Activated T-helper 1 cell treated with anti-CD3 and anti-CD28 coated beads, Interleukin-12 subunit alpha, Interleukin-12 subunit beta, Interleukin-2, Interleukin-4 antibody, amounts not matched to agents 30 ng/mL and 10 ng/mL and 1 ng/mL, durations not matched to agents 14 hours and 24 hours and 36 hours (primary cell): ENCODE measurements at regions of chr7 and their contacts with region 1.

Region 1: GRCh38 chr7:74498996-74499831 is 45.5 kb downstream of the GTF2IRD1 start:
- DNase-seq: no peak
- H3K4me3 Mint-ChIP-seq: no peak overlapping the region
- H3K27ac Mint-ChIP-seq: no peak overlapping the region
- H3K4me1 Mint-ChIP-seq: no peaks in the 10 kb centered on the region
- H3K27me3 Mint-ChIP-seq: no peaks in the 10 kb centered on the region

Region 2: GRCh38 chr7:74554178-74554577 is 55.0 kb after region 1 on chr7:
- intact Hi-C with region 1: loop called (anchors 10 kb)
- DNase-seq: no peak
- H3K4me3 Mint-ChIP-seq: no peak overlapping the region
- H3K27ac Mint-ChIP-seq: no peak overlapping the region
- H3K4me1 Mint-ChIP-seq: no peaks in the 10 kb centered on the region
- H3K27me3 Mint-ChIP-seq: peaks cover 3% of the 10 kb centered on the region